Astrocyte of the cerebellum (primary cell): ENCODE measurements at regions of chr2 and their contacts with region 1.

Region 1: GRCh38 chr2:52794581-52794980 is 973.0 kb upstream of the CHAC2 start:
- DNase-seq: no peak
- H3K4me3 ChIP-seq: no peak overlapping the region
- CTCF ChIP-seq: no peak

Region 2: GRCh38 chr2:52835909-52836308 is 41.3 kb after region 1 on chr2:
- in situ Hi-C with region 1: loop called (anchors 5 kb)
- DNase-seq: no peak
- H3K4me3 ChIP-seq: no peak overlapping the region
- CTCF ChIP-seq: no peak